Thyroid gland (tissue), 4 donors: ENCODE measurements at regions of chr15 and their contacts with region 1.

Region 1: GRCh38 chr15:80423215-80423614 is 19.0 kb downstream of the ARNT2 start:
- DNase-seq: no peak
- H3K4me3 ChIP-seq: no peak overlapping the region
- H3K27ac ChIP-seq: no peak overlapping the region
- H3K4me1 ChIP-seq: peaks cover 0 to 6% of the 10 kb centered on the region in 2 donors
- H3K27me3 ChIP-seq: no peaks in the 10 kb centered on the region
- CTCF ChIP-seq: no peak
- POLR2A ChIP-seq: no peak

Region 2: GRCh38 chr15:80141916-80142598 is 281.2 kb before region 1 on chr15:
- intact Hi-C with region 1: no loop called
- DNase-seq: no peak
- H3K4me3 ChIP-seq: no peak overlapping the region
- H3K27ac ChIP-seq: no peak overlapping the region
- H3K4me1 ChIP-seq: no peaks in the 10 kb centered on the region
- H3K27me3 ChIP-seq: no peaks in the 10 kb centered on the region
- CTCF ChIP-seq: no peak
- POLR2A ChIP-seq: no peak

Region 3: GRCh38 chr15:80251428-80252120 is 171.6 kb before region 1 on chr15:
- intact Hi-C with region 1: no loop called
- DNase-seq: no peak
- H3K4me3 ChIP-seq: peak overlapping the region in 1 of 3 donors; percentile 47
- H3K27ac ChIP-seq: no peak overlapping the region
- H3K4me1 ChIP-seq: peaks cover 5 to 12% of the 10 kb centered on the region in 2 donors
- H3K27me3 ChIP-seq: no peaks in the 10 kb centered on the region
- CTCF ChIP-seq: no peak
- POLR2A ChIP-seq: no peak

Region 4: DNA sequence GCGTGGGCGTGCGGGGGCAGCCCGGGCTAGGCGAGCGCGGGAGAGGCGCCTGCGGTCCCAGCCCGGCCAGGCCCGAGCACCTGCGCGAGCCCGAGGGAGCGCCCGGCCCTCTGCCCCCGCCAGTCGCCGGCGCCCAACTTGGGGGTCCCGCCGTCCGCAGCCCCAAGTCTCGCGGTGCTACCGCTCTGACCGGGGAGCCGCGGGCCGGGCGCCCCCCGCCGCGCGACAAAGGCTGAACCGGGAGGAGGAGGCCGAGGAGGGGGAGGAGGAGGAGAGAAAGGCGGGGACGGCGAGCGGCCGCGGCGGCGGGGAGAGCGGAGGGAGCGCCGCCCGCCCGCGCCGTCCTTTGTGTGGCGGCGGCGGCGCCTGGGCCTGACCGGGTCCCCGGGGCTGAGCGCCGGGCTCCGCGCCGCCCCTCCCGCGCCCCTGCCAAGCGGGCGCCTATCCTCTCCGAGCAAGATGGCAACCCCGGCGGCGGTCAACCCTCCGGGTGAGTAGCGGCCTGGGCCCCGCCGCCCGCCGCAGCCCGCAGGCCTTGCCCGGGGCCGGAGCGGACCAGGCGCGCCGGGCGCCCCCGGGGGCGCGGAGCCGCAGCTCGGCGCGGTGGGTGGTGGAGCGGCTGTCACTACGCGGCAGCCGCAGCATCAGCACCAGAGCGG is 19.0 kb before region 1 on chr15 and contains the start of gene ARNT2:
- intact Hi-C with region 1: loop called (anchors 2 kb)
- DNase-seq: peak; percentile 43 to 49
- H3K4me3 ChIP-seq: peak within 1 kb of the TSS in 2 of 3 donors; percentile 39 to 45
- H3K27ac ChIP-seq: peak within 1 kb of the TSS; percentile 3 to 84 (median 67)
- H3K4me1 ChIP-seq: peaks cover 13 to 14% of the 10 kb centered on the region in 2 donors
- H3K27me3 ChIP-seq: no peaks in the 10 kb centered on the region
- CTCF ChIP-seq: no peak
- POLR2A ChIP-seq: peak in 1 of 2 donors; percentile 46
- total RNA-seq, gene ARNT2: 9.4 to 19.1 (median 13.8) TPM

Region 5: DNA sequence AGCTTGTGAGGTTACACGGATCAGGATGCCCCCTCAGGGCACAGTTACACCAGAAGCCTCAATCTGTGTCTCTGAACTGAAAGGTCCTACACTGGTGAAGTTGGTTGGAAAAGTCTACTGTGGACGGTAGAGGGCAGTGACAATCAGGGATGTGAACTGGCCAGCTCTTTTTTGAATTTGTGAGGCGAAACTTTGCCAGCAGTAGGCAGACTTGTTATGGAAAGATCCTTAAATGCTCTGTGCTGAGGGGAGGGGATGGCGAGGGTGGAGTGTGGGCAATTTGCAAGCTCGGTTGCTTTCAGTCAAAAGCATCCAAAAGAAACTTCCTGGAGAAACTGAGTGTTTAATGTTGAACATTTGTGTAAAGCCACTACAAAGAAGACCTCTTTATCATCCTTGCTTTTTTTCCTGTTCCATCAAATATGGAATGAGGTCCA is 144.5 kb after region 1 on chr15:
- intact Hi-C with region 1: no loop called
- DNase-seq: peak; percentile 71 to 74
- H3K4me3 ChIP-seq: no peak overlapping the region
- H3K27ac ChIP-seq: no peak overlapping the region
- H3K4me1 ChIP-seq: peaks cover 0 to 7% of the 10 kb centered on the region in 2 donors
- H3K27me3 ChIP-seq: no peaks in the 10 kb centered on the region
- CTCF ChIP-seq: peak; percentile 45 to 88 (median 76)
- POLR2A ChIP-seq: no peak

Region 6: GRCh38 chr15:80615761-80616391 is 192.7 kb after region 1 on chr15:
- intact Hi-C with region 1: no loop called
- DNase-seq: peak; percentile 93 to 94
- H3K4me3 ChIP-seq: no peak overlapping the region
- H3K27ac ChIP-seq: peak overlapping the region; percentile 58 to 71 (median 71)
- H3K4me1 ChIP-seq: peaks cover 16 to 31% of the 10 kb centered on the region in 2 donors
- H3K27me3 ChIP-seq: no peaks in the 10 kb centered on the region
- CTCF ChIP-seq: no peak
- POLR2A ChIP-seq: peak in 1 of 2 donors; percentile 18